A549 (cell line): ENCODE measurements at regions of chr17 and their contacts with region 1.

Region 1: GRCh38 chr17:6651357-6651918 is at the starts of genes C17orf100 and MED31:
- DNase-seq: peak; percentile 95 to 99
- ATAC-seq: peak; percentile 92 to 97
- H3K4me3 ChIP-seq: peak within 1 kb of the TSS; percentile 87
- H3K27ac ChIP-seq: peak within 1 kb of the TSS; percentile 82 to 88
- H3K4me1 ChIP-seq: peaks cover 23% of the 10 kb centered on the region; the same call in 2 of the 3 replicates
- CTCF ChIP-seq: no peak
- EP300 ChIP-seq: no peak
- POLR2A ChIP-seq: peak; percentile 69
- RAD21 ChIP-seq: no peak
- polyA plus RNA-seq, gene C17orf100: 4.1 and 4.2 TPM in 2 replicates
- polyA plus RNA-seq, gene MED31: 49.0 and 50.2 TPM in 2 replicates

Region 2: GRCh38 chr17:6640536-6641373 is 10.7 kb before region 1 on chr17 and contains the starts of genes KIAA0753 and TXNDC17:
- CTCF ChIA-PET with region 1: interaction called, 7 read pairs
- POLR2A ChIA-PET with region 1: interaction called, 12 read pairs
- DNase-seq: peak; percentile 85 to 94
- ATAC-seq: peak; percentile 89 to 93
- H3K4me3 ChIP-seq: peak within 1 kb of the TSS; percentile 81
- H3K27ac ChIP-seq: peak within 1 kb of the TSS; percentile 94 to 97
- H3K4me1 ChIP-seq: peaks cover 22% of the 10 kb centered on the region
- CTCF ChIP-seq: no peak
- EP300 ChIP-seq: no peak
- POLR2A ChIP-seq: peak; percentile 99
- RAD21 ChIP-seq: 0 out of 5 replicates have a peak, but pooled peaks of 1 of the 2 experiments have one; percentile 22
- polyA plus RNA-seq, gene KIAA0753: 15.2 and 21.5 TPM in 2 replicates
- polyA plus RNA-seq, gene TXNDC17: 517 and 572 TPM in 2 replicates

Region 3: DNA sequence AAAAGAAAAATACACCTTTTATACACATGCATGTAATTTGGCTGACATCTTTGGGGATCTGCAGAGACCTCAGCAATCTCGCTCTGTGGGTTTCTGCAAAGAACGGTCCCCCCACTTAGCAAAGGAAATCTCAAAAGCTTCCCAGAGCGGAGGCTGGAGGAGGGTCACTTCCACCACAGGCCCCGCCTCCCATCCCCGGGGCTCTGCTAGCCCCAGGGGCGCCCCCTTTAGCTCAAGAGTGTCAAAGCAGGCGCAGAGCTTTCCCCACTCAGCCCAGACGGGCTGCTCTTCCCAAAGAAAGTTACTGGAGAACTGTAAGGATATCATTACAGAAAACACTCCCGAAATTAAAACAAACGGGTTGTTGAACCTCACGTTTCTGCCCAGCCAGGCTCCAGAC is 50.3 kb after region 1 on chr17:
- CTCF ChIA-PET with region 1: no interaction called
- POLR2A ChIA-PET with region 1: no interaction called
- DNase-seq: peak; percentile 50 to 72
- ATAC-seq: peak; percentile 73 to 94; a peak in 5 of 6 replicates
- H3K4me3 ChIP-seq: no peak overlapping the region
- H3K27ac ChIP-seq: no peak overlapping the region
- H3K4me1 ChIP-seq: no peaks in the 10 kb centered on the region
- CTCF ChIP-seq: peak; percentile 32; the same call in 2 of the 3 replicates
- EP300 ChIP-seq: no peak
- POLR2A ChIP-seq: no peak
- RAD21 ChIP-seq: peak in 1 of 2 experiments; percentile 22; a peak in 1 of 5 replicates